Mammary epithelial cell (primary cell): ENCODE measurements at regions of chr13 and their contacts with region 1.

Region 1: GRCh38 chr13:48769107-48769704 is 115.5 kb downstream of the CYSLTR2 start:
- DNase-seq: peak; percentile 74
- H3K4me3 ChIP-seq: no peak overlapping the region
- H3K27ac ChIP-seq: no peak overlapping the region
- H3K4me1 ChIP-seq: no peaks in the 10 kb centered on the region
- H3K27me3 ChIP-seq: no peaks in the 10 kb centered on the region
- CTCF ChIP-seq: peak; percentile 100

Region 2: GRCh38 chr13:47794963-47795362 is 974.2 kb before region 1 on chr13:
- CTCF ChIA-PET with region 1: no interaction called
- dilution Hi-C with region 1: no loop called
- in situ Hi-C with region 1: no loop called
- intact Hi-C with region 1: loop called (anchors 5 kb)
- DNase-seq: peak; percentile 4
- H3K4me3 ChIP-seq: no peak overlapping the region
- H3K27ac ChIP-seq: no peak overlapping the region
- H3K4me1 ChIP-seq: no peaks in the 10 kb centered on the region
- H3K27me3 ChIP-seq: no peaks in the 10 kb centered on the region
- CTCF ChIP-seq: peak; percentile 70 to 72

Region 3: DNA sequence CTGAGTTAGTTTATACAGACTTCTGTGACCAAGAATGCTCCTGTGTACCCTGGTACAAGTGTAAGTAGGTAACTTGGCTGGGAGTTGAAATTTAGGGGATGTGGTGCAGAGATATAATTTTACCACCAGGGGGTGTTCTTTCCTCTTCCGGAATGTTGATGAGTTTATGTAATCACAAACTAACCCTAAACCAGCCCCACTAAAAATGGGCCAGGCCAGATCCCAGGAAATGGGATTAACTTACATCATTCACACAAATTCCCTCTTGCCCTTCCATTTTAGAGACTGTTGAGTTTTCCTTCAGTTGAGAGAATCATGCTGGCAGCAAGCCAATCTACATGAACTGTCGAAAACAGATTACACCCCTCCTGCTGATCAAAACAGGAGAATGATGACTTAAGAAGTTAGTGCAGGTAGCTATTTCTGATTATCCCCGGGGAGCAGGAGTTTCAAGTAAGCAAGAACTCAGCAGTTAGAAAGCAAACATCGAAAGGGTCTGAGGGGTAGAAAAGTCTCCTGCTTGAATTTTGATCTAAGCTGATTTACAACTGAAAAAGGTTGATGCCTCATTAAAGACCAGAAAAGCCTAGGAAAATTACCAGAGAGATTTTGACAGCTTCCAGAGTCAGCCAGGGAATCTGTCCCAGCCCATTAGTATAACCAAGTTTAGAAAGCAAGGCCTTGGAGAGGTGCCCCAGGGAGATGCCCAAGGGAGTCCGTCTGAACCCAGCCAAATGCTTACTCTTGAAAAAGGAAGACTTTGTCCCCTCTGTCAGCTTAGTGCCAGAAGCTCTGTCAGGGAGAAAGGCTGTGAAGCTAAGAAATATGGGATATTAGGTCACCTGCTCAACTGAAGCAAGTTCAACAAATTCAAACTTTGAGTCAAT is 642.0 kb before region 1 on chr13:
- CTCF ChIA-PET with region 1: no interaction called
- dilution Hi-C with region 1: no loop called
- in situ Hi-C with region 1: loop called in 1 of 2 experiments (anchors 25 kb)
- intact Hi-C with region 1: loop called (anchors 1 kb)
- DNase-seq: peak; percentile 67
- H3K4me3 ChIP-seq: no peak overlapping the region
- H3K27ac ChIP-seq: peak overlapping the region; percentile 29
- H3K4me1 ChIP-seq: peaks cover 24% of the 10 kb centered on the region
- H3K27me3 ChIP-seq: no peaks in the 10 kb centered on the region
- CTCF ChIP-seq: peak; percentile 61 to 72

Region 4: DNA sequence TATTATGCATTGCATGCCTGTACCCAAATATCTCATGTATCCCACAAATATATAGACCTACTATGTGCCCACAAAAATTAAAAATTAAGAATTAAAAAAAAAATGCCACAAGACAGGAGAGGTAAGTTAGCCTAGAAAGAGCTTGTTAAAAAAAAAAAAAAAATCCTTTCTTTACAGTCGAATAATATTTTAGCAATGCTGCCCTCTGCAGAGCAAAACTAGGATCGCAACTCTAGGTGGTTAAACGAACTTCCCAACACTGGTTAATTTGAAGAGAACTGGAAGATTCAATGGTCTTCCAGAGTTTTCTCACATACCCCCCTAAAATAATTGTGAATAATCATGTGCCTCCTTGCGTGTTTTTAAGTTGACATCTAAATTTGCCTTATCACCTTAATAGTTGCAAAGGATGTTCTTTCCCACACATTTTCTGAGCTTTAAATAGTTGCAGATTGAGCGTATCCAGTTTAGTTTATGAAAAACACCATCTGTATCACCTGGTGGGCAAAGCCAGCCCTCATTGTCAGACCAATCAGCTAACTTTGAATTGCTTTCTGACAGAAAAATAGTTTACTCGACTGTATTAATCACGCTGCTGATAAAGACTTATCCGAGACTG is 188.9 kb before region 1 on chr13:
- CTCF ChIA-PET with region 1: no interaction called
- dilution Hi-C with region 1: no loop called
- in situ Hi-C with region 1: no loop called
- intact Hi-C with region 1: no loop called
- DNase-seq: peak; percentile 59
- H3K4me3 ChIP-seq: no peak overlapping the region
- H3K27ac ChIP-seq: no peak overlapping the region
- H3K4me1 ChIP-seq: peaks cover 40% of the 10 kb centered on the region
- H3K27me3 ChIP-seq: no peaks in the 10 kb centered on the region
- CTCF ChIP-seq: peak; percentile 70 to 71

Region 5: GRCh38 chr13:48595431-48596429 is 173.5 kb before region 1 on chr13:
- CTCF ChIA-PET with region 1: interaction called, 3 read pairs
- dilution Hi-C with region 1: no loop called
- in situ Hi-C with region 1: loop called (anchors 5 kb)
- intact Hi-C with region 1: loop called (anchors 1 kb)
- DNase-seq: peak; percentile 68
- H3K4me3 ChIP-seq: no peak overlapping the region
- H3K27ac ChIP-seq: no peak overlapping the region
- H3K4me1 ChIP-seq: peaks cover 3% of the 10 kb centered on the region
- H3K27me3 ChIP-seq: no peaks in the 10 kb centered on the region
- CTCF ChIP-seq: peak; percentile 49 to 90

Region 6: DNA sequence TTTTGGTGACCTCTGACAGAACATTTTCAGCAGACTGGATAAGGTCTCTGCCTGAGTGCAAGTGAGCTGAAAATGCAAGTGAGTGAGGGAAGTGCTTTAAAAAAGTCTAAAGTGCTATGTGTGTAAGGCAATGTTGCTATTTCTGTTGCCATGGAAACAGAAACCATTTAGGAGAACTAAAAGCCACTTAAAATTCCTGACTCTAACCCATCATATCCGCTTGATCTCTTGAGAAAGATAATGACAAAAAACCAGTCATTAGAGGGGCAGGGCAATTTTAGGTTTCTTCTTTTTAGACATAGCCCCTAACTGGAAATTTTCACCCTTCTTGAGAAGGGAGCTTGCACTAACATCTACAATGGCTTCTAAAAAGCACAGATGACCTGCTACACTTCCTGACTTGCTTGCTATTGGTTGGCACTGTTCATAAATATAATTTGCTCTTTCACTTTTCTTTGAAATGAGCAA is 115.7 kb before region 1 on chr13 and contains the start of gene CYSLTR2:
- CTCF ChIA-PET with region 1: no interaction called
- dilution Hi-C with region 1: no loop called
- in situ Hi-C with region 1: no loop called
- intact Hi-C with region 1: no loop called
- DNase-seq: no peak
- H3K4me3 ChIP-seq: no peak within 1 kb of the TSS
- H3K27ac ChIP-seq: no peak within 1 kb of the TSS
- H3K4me1 ChIP-seq: no peaks in the 10 kb centered on the region
- H3K27me3 ChIP-seq: no peaks in the 10 kb centered on the region
- CTCF ChIP-seq: no peak
- total RNA-seq, gene CYSLTR2: not detected

Region 7: DNA sequence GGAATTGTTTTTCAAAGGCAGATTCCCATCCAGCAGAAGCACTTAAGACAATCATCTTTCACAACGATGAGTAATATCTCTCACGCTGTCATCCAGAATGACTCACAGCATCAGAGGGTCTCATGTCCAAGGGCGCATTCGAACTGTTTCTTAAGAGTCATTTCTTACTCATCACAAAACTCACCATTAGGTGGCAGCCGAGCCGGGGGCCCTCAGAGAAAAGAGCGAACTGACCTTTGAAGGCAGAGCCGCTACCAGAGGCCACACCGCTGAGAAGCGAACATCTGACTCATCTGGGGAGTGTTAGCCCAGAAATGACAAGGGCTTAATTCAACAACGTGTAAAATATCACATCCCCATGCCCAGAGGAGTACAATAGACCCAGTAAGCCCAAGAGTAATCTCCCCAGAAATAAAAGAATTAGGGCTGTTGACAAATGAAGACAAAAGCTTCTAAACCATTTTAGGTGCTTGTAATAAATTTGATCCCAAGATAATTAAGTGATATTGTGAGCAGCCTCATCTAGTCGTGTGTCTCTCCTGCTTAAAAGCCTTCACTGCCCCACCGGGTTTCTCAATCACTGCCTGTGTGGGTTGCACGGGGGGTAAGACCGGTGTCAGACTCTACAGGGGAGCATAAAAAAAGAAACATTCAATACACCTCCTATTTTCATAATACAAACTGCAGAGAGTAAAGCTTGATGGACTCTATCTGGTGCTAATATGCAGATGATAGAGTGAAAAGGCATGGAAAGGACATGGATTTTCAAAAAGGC is 19.3 kb before region 1 on chr13:
- CTCF ChIA-PET with region 1: no interaction called
- dilution Hi-C with region 1: no loop called
- in situ Hi-C with region 1: no loop called
- intact Hi-C with region 1: loop called (anchors 2 kb)
- DNase-seq: peak; percentile 99
- H3K4me3 ChIP-seq: no peak overlapping the region
- H3K27ac ChIP-seq: peak overlapping the region; percentile 82
- H3K4me1 ChIP-seq: peaks cover 22% of the 10 kb centered on the region
- H3K27me3 ChIP-seq: no peaks in the 10 kb centered on the region
- CTCF ChIP-seq: peak; percentile 42 to 64

Region 8: DNA sequence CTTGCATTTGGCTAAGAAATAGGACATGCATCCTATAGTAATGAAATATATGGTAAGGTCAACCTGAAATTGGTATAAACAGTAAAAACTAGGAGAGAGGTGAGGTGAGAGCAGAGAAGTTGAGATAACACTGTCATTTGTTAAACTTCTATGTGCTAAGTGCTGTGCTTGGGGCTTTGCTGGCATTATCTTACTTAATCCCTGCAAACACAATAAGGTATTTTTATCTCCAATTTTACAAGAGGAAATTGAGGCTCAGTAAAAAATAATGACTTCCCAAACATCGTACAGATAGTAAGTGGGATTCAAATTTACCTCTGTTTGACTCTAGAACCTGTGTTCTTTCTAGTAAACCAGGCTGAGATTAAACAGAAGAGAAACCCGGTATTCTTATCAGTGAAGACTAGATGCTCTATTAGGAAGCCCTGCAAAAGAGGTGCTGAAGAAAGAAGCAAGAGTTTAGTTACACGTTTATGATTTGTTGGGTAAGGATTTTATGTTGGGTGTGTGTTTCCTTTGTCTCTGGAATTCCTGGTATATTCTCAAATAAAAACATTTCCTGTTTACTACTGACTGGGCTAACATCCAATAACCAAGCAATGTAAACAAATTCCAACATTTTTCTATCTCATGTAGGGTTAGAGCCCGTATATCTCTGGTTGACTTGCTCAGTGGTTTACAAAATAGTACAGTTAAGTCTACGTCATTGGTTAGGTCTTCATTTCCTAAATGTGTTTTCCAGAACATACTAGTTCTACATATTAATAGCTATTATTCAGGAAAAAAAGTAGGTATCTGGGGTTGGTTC is 69.2 kb after region 1 on chr13:
- CTCF ChIA-PET with region 1: no interaction called
- dilution Hi-C with region 1: no loop called
- in situ Hi-C with region 1: no loop called
- intact Hi-C with region 1: no loop called
- DNase-seq: no peak
- H3K4me3 ChIP-seq: no peak overlapping the region
- H3K27ac ChIP-seq: no peak overlapping the region
- H3K4me1 ChIP-seq: no peaks in the 10 kb centered on the region
- H3K27me3 ChIP-seq: no peaks in the 10 kb centered on the region
- CTCF ChIP-seq: no peak

Region 9: GRCh38 chr13:48923376-48923775 is 154.2 kb after region 1 on chr13:
- CTCF ChIA-PET with region 1: no interaction called
- dilution Hi-C with region 1: no loop called
- in situ Hi-C with region 1: no loop called
- intact Hi-C with region 1: no loop called
- DNase-seq: no peak
- H3K4me3 ChIP-seq: no peak overlapping the region
- H3K27ac ChIP-seq: no peak overlapping the region
- H3K4me1 ChIP-seq: no peaks in the 10 kb centered on the region
- H3K27me3 ChIP-seq: no peaks in the 10 kb centered on the region
- CTCF ChIP-seq: no peak